ENCODE measurements at regions of chr11 and their contacts with region 1.

Region 1: GRCh38 chr11:73614591-73615244 is 16.8 kb upstream of the FAM168A start:
- DNase-seq: no peak

Region 2: DNA sequence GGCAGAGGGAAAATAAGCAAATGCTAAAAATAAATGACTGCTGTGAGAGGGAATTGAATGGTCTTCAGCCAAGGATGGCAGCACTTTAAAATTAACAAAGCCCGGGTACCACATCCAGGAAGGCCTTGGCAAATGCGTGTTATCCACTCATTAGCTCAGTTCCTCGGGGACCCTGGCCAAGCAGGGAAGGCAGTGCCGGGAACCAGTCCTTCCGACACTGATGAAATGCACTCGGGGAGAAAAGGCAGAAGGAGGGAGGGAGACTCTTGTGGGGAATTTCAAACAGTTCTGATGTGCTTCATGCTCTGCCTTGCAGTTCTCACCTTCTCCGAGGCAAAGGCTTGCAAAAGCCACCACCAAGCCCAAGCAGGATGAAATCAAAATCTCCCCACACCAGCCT is 1218.7 kb before region 1 on chr11:
- intact Hi-C with region 1: no loop called
- DNase-seq: no peak

Region 3: GRCh38 chr11:73047773-73048371 is 566.8 kb before region 1 on chr11:
- intact Hi-C with region 1: loop called in 1 of 2 experiments (anchors 5 kb)
- DNase-seq: no peak

Region 4: GRCh38 chr11:73530109-73530508 is 84.6 kb before region 1 on chr11:
- intact Hi-C with region 1: no loop called
- DNase-seq: no peak

Region 5: DNA sequence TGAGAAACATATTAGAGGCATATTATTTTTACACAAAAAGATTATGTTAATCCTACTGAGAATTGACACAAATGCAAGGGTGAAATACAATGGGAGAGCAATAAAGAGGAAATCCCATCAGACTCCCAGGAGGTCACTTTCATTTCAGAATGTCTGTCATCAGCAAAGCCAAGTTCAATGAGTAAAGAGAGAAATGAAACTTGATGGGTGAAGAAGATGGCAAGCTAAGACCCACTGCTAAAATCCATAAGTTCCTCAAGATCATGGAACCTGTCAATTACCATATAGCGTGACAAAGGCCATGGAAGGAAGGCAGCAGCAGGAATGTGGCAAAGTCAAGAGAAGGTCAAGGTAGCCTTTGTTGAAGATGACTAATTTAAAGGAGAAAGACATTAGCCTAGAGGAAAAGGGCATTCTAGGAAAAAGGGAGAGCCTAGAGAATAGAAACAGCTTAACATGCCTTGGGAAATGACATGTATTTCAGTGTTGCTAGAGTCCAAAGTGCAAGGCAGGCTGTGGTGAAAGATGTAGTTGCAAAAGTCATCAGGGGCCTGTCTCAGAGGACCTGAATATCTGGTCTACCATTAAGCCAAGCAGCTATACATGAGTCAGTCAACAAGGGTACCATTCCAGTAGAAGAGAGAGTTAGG is 59.9 kb before region 1 on chr11:
- intact Hi-C with region 1: no loop called
- DNase-seq: no peak

Region 6: GRCh38 chr11:73752216-73752867 is 137.6 kb after region 1 on chr11:
- intact Hi-C with region 1: no loop called
- DNase-seq: no peak

Measured in posterior vena cava (tissue), 2 donors.